ENCODE measurements at regions of chr6 and their contacts with region 1.

Region 1: GRCh38 chr6:132830334-132830751 is 16.0 kb downstream of the RPS12 start:
- DNase-seq: no peak
- H3K4me3 Mint-ChIP-seq: no peak overlapping the region
- H3K27ac Mint-ChIP-seq: no peak overlapping the region
- H3K4me1 Mint-ChIP-seq: no peaks in the 10 kb centered on the region
- H3K27me3 Mint-ChIP-seq: peaks cover 12% of the 10 kb centered on the region

Region 2: DNA sequence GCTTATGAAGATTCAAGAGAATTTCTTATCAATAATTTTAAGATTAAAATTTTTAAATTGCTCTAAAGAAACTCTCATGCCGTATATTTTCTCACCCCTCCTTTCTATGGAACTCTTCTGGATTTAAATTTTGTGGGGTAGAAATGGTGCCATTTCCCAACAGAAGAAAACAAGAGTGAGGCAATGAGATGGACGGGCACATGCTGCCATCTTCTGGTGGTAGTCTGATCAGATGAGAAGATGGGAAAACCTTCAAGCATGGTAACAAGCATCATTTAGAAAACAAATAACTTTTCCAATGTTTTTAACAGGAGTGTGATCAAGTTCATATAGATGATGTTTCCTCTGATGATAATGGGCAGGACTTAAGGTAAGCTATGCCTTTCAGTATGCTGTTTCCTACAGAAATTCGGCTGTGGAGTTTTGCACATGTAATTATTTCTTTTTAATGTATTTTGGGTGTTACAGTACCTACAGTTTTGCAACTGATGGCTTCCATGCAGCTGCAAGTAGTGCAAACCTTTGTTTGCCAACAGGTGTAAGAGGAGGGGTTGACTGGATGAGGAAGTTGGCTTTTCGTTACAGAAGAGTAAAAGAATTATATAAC is 682.2 kb after region 1 on chr6:
- intact Hi-C with region 1: loop called (anchors 2 kb)
- DNase-seq: peak; percentile 70
- H3K4me3 Mint-ChIP-seq: no peak overlapping the region
- H3K27ac Mint-ChIP-seq: no peak overlapping the region
- H3K4me1 Mint-ChIP-seq: no peaks in the 10 kb centered on the region
- H3K27me3 Mint-ChIP-seq: peaks cover 2% of the 10 kb centered on the region

Measured in activated CD4-positive, alpha-beta T cell treated with anti-CD3 and anti-CD28 coated beads, Interleukin-2, amount 10 ng/mL, durations not matched to agents 24 days and 14 days (primary cell).